Naive thymus-derived CD4-positive, alpha-beta T cell (primary cell): ENCODE measurements at regions of chr1 and their contacts with region 1.

Region 1: GRCh38 chr1:10032590-10033358 is at the start of gene UBE4B:
- DNase-seq: peak; percentile 98 to 100 (median 99)
- ATAC-seq: peak; percentile 97
- H3K4me3 ChIP-seq: peak within 1 kb of the TSS; percentile 96
- H3K4me3 Mint-ChIP-seq: peak within 1 kb of the TSS; percentile 79 to 98 (median 96)
- H3K27ac ChIP-seq: peak within 1 kb of the TSS; percentile 94
- H3K27ac Mint-ChIP-seq: peak within 1 kb of the TSS; percentile 91 to 98 (median 97)
- H3K4me1 ChIP-seq: peaks cover 14 to 15% of the 10 kb centered on the region in 2 donors
- H3K4me1 Mint-ChIP-seq: peaks cover 20 to 34% (median 28%) of the 10 kb centered on the region in 7 donors
- H3K27me3 ChIP-seq: no peaks in the 10 kb centered on the region
- H3K27me3 Mint-ChIP-seq: no peaks in the 10 kb centered on the region
- total RNA-seq, gene UBE4B: 37.9 to 48.3 (median 39.3) TPM

Region 2: GRCh38 chr1:9428601-9429341 is 604.0 kb before region 1 on chr1:
- CTCF ChIA-PET with region 1: no interaction called
- POLR2A ChIA-PET with region 1: no interaction called
- intact Hi-C with region 1: loop called in 1 of 2 experiments (anchors 2 kb)
- DNase-seq: peak; percentile 96 to 100 (median 99)
- ATAC-seq: peak; percentile 90
- H3K4me3 ChIP-seq: peak overlapping the region; percentile 80
- H3K4me3 Mint-ChIP-seq: peak overlapping the region; percentile 80 to 100 (median 96)
- H3K27ac ChIP-seq: peak overlapping the region; percentile 88
- H3K27ac Mint-ChIP-seq: peak overlapping the region; percentile 92 to 100 (median 98)
- H3K4me1 ChIP-seq: peaks cover 28 to 42% of the 10 kb centered on the region in 2 donors
- H3K4me1 Mint-ChIP-seq: peaks cover 34 to 64% (median 56%) of the 10 kb centered on the region in 7 donors
- H3K27me3 ChIP-seq: no peaks in the 10 kb centered on the region
- H3K27me3 Mint-ChIP-seq: peaks cover 0 to 21% (median 0%) of the 10 kb centered on the region in 5 donors

Region 3: DNA sequence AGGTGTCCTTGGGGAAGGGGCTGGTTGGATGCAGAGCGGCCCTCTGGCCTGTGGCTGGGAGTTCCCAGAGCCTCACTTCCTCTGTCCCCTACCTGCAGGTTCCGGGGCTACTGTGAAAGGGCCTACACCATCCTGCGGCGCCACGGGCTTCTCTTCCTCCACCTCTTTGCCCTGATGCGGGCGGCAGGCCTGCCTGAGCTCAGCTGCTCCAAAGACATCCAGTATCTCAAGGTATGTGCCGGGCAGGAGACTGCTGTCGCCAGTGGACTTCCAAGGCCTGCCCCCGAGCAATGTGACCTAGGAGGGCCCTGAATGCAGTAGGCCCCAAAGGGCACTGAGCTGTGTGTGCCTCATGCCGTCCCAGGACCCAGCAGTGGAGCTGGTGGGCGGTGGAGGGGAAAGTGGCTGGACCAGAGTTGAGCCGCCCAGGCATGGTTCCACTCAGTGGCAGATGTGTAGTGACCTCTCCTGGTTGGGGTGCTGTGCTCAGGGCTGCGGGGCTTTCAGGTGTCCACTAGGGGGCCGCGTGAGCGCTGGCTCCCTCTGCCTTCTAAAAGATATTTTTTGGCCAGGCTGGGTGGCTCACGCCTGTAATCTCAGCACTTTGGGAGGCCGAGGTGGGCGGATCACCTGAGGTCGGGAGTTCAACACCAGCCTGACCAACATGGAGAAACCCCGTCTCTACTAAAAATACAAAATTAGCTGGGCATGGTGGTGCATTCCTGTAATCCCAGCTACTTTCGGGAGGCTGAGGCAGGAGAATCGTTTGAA is 307.9 kb before region 1 on chr1:
- CTCF ChIA-PET with region 1: no interaction called
- POLR2A ChIA-PET with region 1: no interaction called
- intact Hi-C with region 1: loop called in 1 of 2 experiments (anchors 2 kb)
- DNase-seq: peak; percentile 58 to 72 (median 64)
- ATAC-seq: peak; percentile 65
- H3K4me3 ChIP-seq: no peak overlapping the region
- H3K4me3 Mint-ChIP-seq: peak overlapping the region in 8 of 10 donors; percentile 14 to 68 (median 62)
- H3K27ac ChIP-seq: peak overlapping the region; percentile 51
- H3K27ac Mint-ChIP-seq: peak overlapping the region; percentile 73 to 88 (median 80)
- H3K4me1 ChIP-seq: peaks cover 36 to 83% of the 10 kb centered on the region in 2 donors
- H3K4me1 Mint-ChIP-seq: peaks cover 38 to 84% (median 60%) of the 10 kb centered on the region in 7 donors
- H3K27me3 ChIP-seq: no peaks in the 10 kb centered on the region
- H3K27me3 Mint-ChIP-seq: no peaks in the 10 kb centered on the region

Region 4: DNA sequence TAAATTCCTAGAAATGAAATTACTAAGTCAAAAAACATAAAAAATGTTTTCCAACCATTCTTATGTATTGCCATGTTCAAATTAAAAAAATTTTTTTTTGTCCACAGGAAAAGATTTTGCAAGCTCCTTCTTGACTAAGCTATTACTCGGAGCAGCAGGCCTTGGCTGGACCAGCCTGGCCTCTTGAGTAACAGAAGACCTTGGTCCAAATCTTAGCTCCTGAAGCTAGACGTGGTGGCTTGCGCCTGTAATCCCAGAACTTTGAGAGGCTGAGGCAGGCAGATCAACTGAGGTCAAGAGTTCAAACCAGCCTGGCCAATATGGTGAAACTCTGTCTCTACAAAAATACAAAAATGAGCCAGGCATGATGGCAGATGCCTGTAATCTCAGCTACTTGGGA is 286.6 kb before region 1 on chr1:
- CTCF ChIA-PET with region 1: no interaction called
- POLR2A ChIA-PET with region 1: no interaction called
- intact Hi-C with region 1: no loop called
- DNase-seq: no peak
- ATAC-seq: no peak
- H3K4me3 ChIP-seq: no peak overlapping the region
- H3K4me3 Mint-ChIP-seq: no peak overlapping the region
- H3K27ac ChIP-seq: no peak overlapping the region
- H3K27ac Mint-ChIP-seq: peak overlapping the region in 2 of 9 donors; percentile 12 to 38
- H3K4me1 ChIP-seq: no peaks in the 10 kb centered on the region
- H3K4me1 Mint-ChIP-seq: peaks cover 0 to 4% (median 0%) of the 10 kb centered on the region in 7 donors
- H3K27me3 ChIP-seq: no peaks in the 10 kb centered on the region
- H3K27me3 Mint-ChIP-seq: no peaks in the 10 kb centered on the region

Region 5: DNA sequence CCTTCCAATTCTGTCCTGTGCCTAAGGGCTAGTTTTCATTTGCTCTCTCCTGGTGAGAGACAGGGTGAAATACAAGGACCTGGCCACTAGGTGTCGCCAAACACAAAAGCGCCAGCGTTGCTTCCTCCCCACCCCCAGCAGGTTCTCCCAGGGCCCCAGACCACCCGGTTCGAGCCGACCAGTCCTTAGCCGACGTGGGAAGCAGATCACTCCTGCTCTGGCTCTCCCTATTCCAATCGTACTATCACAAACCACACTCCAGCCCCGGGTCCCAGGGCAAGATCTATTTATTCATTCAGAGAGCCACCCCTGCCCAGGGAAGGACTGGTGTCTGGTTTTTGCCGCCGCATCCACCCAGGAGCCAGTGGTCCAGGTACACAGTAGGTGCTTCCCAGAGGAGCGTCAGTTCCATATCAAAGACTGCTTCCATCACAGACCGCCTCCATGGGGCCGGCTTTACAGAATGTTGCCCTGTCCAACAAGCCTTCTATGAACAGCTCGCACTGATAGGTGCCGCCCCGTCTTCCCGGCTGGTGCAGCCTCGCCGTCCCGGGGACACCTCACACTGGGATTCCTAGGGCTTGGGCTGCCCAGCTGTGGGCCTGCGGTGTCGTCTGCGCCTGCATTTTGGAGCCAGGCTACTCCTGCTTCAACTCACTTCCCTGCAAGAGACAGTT is 157.7 kb before region 1 on chr1:
- CTCF ChIA-PET with region 1: interaction called, 4 read pairs
- POLR2A ChIA-PET with region 1: no interaction called
- intact Hi-C with region 1: loop called (anchors 1 kb)
- DNase-seq: peak; percentile 54 to 73 (median 64)
- ATAC-seq: peak; percentile 93
- H3K4me3 ChIP-seq: no peak overlapping the region
- H3K4me3 Mint-ChIP-seq: peak overlapping the region in 1 of 10 donors; percentile 14
- H3K27ac ChIP-seq: no peak overlapping the region
- H3K27ac Mint-ChIP-seq: peak overlapping the region in 3 of 9 donors; percentile 16 to 23 (median 16)
- H3K4me1 ChIP-seq: no peaks in the 10 kb centered on the region
- H3K4me1 Mint-ChIP-seq: peaks cover 6 to 9% (median 7%) of the 10 kb centered on the region in 7 donors
- H3K27me3 ChIP-seq: no peaks in the 10 kb centered on the region
- H3K27me3 Mint-ChIP-seq: no peaks in the 10 kb centered on the region

Region 6: GRCh38 chr1:9904596-9904995 is 128.2 kb before region 1 on chr1:
- CTCF ChIA-PET with region 1: no interaction called
- POLR2A ChIA-PET with region 1: no interaction called
- intact Hi-C with region 1: no loop called
- DNase-seq: no peak
- ATAC-seq: no peak
- H3K4me3 ChIP-seq: no peak overlapping the region
- H3K4me3 Mint-ChIP-seq: peak overlapping the region in 1 of 10 donors; percentile 48
- H3K27ac ChIP-seq: no peak overlapping the region
- H3K27ac Mint-ChIP-seq: no peak overlapping the region
- H3K4me1 ChIP-seq: peaks cover 9% of the 10 kb centered on the region in 2 donors
- H3K4me1 Mint-ChIP-seq: peaks cover 23 to 42% (median 34%) of the 10 kb centered on the region in 7 donors
- H3K27me3 ChIP-seq: no peaks in the 10 kb centered on the region
- H3K27me3 Mint-ChIP-seq: no peaks in the 10 kb centered on the region

Region 7: DNA sequence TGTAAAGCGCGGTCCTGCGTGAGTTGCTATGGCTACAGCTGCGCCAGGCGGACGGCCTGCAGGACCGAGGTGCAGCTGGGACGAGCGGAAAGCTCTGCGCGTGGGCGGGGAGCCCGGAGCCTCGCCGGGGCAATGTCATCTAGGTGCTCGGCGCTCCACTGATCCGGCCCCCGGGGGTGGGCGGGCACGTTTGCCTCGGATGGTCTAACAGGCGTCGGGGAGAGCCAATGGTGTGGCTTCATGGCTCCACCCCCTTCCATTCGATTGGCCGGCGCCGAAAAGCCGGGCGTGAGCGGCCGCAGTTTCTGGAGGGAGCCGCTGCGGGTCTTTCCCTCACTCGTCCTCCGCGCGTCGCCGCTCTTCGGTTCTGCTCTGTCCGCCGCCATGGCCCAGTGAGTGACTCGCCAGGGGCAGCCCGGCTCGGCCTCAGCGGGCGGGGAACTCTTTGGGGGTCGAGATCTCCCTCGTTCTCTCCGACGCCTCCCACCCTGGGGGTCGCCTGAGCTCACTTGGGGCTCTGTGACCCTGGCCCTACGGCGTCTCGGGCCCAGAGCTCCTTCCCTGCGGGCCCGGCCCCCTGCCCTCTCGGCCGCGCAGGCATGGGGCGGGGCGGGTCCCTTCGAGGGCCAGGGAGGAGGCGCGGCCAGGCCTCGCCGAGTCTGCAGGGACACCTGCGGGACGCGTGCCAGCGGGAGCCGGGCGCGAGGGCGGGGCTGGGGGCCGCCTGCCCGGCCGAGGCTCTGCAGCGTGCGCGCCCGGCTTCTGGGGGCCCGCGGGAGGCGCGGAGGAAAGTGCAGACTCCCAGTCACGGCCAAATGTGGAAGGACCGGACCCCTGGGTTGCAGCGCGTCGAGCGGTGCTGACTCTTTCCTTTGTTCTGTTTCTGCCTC is 366.2 kb after region 1 on chr1 and contains the start of gene PGD:
- CTCF ChIA-PET with region 1: no interaction called
- POLR2A ChIA-PET with region 1: no interaction called
- intact Hi-C with region 1: loop called in 1 of 2 experiments (anchors 1 kb)
- DNase-seq: peak; percentile 87 to 98 (median 94)
- ATAC-seq: peak; percentile 99
- H3K4me3 ChIP-seq: peak within 1 kb of the TSS; percentile 95
- H3K4me3 Mint-ChIP-seq: peak within 1 kb of the TSS; percentile 87 to 97 (median 96)
- H3K27ac ChIP-seq: peak within 1 kb of the TSS; percentile 86
- H3K27ac Mint-ChIP-seq: peak within 1 kb of the TSS; percentile 63 to 94 (median 82)
- H3K4me1 ChIP-seq: peaks cover 4 to 7% of the 10 kb centered on the region in 2 donors
- H3K4me1 Mint-ChIP-seq: peaks cover 10 to 30% (median 25%) of the 10 kb centered on the region in 7 donors
- H3K27me3 ChIP-seq: no peaks in the 10 kb centered on the region
- H3K27me3 Mint-ChIP-seq: no peaks in the 10 kb centered on the region
- total RNA-seq, gene PGD: 42.0 to 110 (median 48.5) TPM

Region 8: DNA sequence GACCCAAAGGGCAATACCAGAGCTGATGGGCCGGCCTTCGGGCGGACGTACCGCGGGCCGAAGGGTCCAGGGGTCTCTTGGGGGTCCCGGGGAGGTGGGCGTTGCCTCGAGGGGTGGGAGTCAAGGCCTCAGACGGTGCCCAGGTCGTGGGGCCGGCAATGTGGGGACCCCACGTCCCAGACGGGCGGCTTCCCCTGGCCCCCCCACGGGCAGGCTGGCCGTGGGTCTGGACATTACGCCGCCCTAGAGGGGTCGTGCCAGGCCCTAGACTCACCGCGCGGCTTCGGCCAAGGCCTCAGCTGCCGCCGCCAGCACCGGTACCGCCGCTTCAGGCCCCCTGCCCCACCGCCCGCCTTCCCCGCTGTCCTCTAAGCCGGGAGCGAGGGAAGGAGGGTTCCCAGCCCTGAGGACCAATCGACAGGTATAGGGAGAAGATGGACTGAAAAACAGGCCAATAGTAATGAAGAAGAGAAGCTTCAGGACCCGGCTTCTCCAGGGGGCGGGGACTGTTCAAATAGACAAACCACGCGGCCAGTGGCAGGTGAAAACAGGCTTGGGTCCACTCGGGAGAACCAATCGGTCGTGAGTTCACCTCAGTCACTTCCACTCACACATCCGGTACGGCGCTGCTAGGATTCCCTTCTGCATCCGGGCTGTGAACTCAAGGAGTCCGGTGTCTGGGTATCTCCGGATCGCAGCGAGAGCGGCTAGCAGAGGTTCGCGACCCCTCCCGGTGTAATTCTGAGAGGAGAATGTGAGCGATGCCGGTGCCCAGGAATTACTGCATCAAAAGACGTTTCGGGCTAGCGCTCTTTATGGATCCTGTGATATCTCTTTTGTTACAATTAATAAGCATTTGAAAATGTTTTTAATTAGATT is 1229.6 kb after region 1 on chr1 and contains the start of gene MTOR:
- CTCF ChIA-PET with region 1: no interaction called
- POLR2A ChIA-PET with region 1: no interaction called
- intact Hi-C with region 1: loop called in 1 of 2 experiments (anchors 5 kb)
- DNase-seq: peak; percentile 76 to 99 (median 98)
- ATAC-seq: peak; percentile 98
- H3K4me3 ChIP-seq: peak within 1 kb of the TSS; percentile 90
- H3K4me3 Mint-ChIP-seq: peak within 1 kb of the TSS; percentile 87 to 98 (median 93)
- H3K27ac ChIP-seq: peak within 1 kb of the TSS; percentile 83
- H3K27ac Mint-ChIP-seq: peak within 1 kb of the TSS; percentile 84 to 96 (median 90)
- H3K4me1 ChIP-seq: peaks cover 9 to 14% of the 10 kb centered on the region in 2 donors
- H3K4me1 Mint-ChIP-seq: peaks cover 6 to 31% (median 22%) of the 10 kb centered on the region in 7 donors
- H3K27me3 ChIP-seq: no peaks in the 10 kb centered on the region
- H3K27me3 Mint-ChIP-seq: peaks cover 0 to 5% (median 0%) of the 10 kb centered on the region in 5 donors
- total RNA-seq, gene MTOR: 38.8 to 47.9 (median 46.2) TPM